Dorsolateral prefrontal cortex (tissue), 120 donors: ENCODE measurements at regions of chr5 and their contacts with region 1.

Region 1: DNA sequence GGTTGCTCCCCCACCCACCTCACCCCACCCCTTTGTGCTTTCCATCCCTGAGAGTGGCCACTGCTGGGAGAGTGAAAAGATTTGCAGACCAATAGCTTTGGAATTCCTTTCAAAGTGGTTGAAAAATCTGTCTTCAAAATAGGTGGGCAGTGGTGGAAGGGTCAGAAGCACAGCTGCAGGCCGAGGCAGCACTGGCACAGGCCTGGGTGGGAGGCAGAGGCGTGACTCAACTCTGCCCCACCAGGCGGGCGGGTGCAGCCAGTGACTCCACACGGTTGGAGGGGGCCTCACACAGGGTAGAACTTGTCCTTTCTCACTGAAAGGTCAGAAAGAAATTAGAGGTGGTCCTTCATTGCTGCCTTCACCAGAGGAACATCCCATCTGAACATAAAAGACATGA is 214.9 kb upstream of the TBCA start:
- DNase-seq: no peak
- H3K4me3 ChIP-seq: no peak overlapping the region
- H3K27ac ChIP-seq: peak overlapping the region in 58 of 59 donors; percentile 40 to 99 (median 96)
- H3K27me3 ChIP-seq: no peaks in the 10 kb centered on the region
- CTCF ChIP-seq: peak in 18 of 56 donors; percentile 9 to 31 (median 22)

Region 2: DNA sequence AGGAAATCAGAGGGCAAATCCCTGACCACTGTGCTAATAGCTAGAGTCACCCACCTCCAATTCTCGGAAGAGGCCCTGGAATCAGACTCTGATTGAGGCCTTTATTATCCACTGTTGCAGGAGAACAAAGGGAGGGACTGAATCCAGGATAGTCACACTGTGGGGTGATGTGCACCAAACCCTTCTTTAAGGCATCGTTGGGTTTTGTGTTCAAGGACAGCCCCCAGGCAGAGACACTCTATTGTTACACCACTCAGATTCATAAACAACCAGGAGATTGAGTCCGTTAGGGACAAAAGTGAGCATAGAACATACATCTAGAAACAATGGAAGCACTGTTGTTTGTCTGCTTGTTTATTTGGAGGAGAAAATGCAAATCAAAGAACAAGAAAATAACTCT is 90.4 kb before region 1 on chr5:
- intact Hi-C with region 1: loop called in 1 of 2 experiments (anchors 2 kb)
- DNase-seq: peak in 6 of 10 donors; percentile 9 to 74 (median 57)
- H3K4me3 ChIP-seq: no peak overlapping the region
- H3K27ac ChIP-seq: peak overlapping the region; percentile 63 to 99 (median 94)
- H3K27me3 ChIP-seq: peaks cover 0 to 3% (median 0%) of the 10 kb centered on the region in 45 donors
- CTCF ChIP-seq: peak in 6 of 56 donors; percentile 4 to 17 (median 8)

Region 3: GRCh38 chr5:78050888-78051287 is 59.8 kb after region 1 on chr5:
- intact Hi-C with region 1: no loop called
- DNase-seq: no peak
- H3K4me3 ChIP-seq: no peak overlapping the region
- H3K27ac ChIP-seq: no peak overlapping the region
- H3K27me3 ChIP-seq: no peaks in the 10 kb centered on the region
- CTCF ChIP-seq: no peak